A673 (cell line): ENCODE measurements at regions of chr2 and their contacts with region 1.

Region 1: DNA sequence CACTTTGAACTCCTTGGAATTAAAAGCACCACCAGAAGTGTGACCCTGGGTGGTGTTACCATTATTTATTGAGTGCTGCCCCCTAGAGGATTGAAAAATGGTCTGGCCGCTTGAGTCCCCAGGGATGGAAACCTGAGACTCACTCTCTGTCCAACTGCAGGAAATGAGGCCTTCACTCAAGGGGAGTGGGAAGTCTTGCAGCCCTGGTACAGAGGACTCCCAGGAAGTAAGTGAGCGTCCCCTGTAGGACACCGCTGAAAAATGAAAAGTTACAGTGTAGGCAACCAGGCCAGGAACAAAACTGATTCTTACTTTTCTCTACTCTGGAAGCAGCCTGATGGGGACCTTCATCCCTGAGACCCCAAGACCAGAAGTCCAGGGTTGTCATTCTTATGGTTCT is 2.2 kb upstream of the NRP2 start:
- DNase-seq: peak; percentile 97
- H3K4me3 ChIP-seq: no peak overlapping the region
- H3K27ac ChIP-seq: no peak overlapping the region
- H3K4me1 ChIP-seq: peaks cover 13% of the 10 kb centered on the region
- H3K27me3 ChIP-seq: peaks cover 27% of the 10 kb centered on the region
- CTCF ChIP-seq: peak; percentile 91

Region 2: GRCh38 chr2:204145263-204145751 is 1534.8 kb before region 1 on chr2:
- CTCF ChIA-PET with region 1: interaction called, 5 read pairs
- POLR2A ChIA-PET with region 1: no interaction called
- intact Hi-C with region 1: loop called (anchors 2 kb)
- DNase-seq: peak; percentile 89
- H3K4me3 ChIP-seq: peak overlapping the region; percentile 35
- H3K27ac ChIP-seq: peak overlapping the region; percentile 55
- H3K4me1 ChIP-seq: peaks cover 3% of the 10 kb centered on the region
- H3K27me3 ChIP-seq: no peaks in the 10 kb centered on the region
- CTCF ChIP-seq: peak; percentile 98

Region 3: GRCh38 chr2:204871231-204871953 is 808.7 kb before region 1 on chr2:
- CTCF ChIA-PET with region 1: interaction called, 7 read pairs
- POLR2A ChIA-PET with region 1: no interaction called
- intact Hi-C with region 1: loop called (anchors 2 kb)
- DNase-seq: peak; percentile 53
- H3K4me3 ChIP-seq: no peak overlapping the region
- H3K27ac ChIP-seq: no peak overlapping the region
- H3K4me1 ChIP-seq: no peaks in the 10 kb centered on the region
- H3K27me3 ChIP-seq: no peaks in the 10 kb centered on the region
- CTCF ChIP-seq: peak; percentile 59

Region 4: GRCh38 chr2:205590759-205591158 is 89.3 kb before region 1 on chr2:
- CTCF ChIA-PET with region 1: no interaction called
- POLR2A ChIA-PET with region 1: interaction called, 17 read pairs
- intact Hi-C with region 1: no loop called
- DNase-seq: no peak
- H3K4me3 ChIP-seq: no peak overlapping the region
- H3K27ac ChIP-seq: no peak overlapping the region
- H3K4me1 ChIP-seq: no peaks in the 10 kb centered on the region
- H3K27me3 ChIP-seq: no peaks in the 10 kb centered on the region
- CTCF ChIP-seq: no peak

Region 5: GRCh38 chr2:205734436-205735037 is 54.5 kb after region 1 on chr2:
- CTCF ChIA-PET with region 1: no interaction called
- POLR2A ChIA-PET with region 1: no interaction called
- intact Hi-C with region 1: no loop called
- DNase-seq: peak; percentile 55
- H3K4me3 ChIP-seq: no peak overlapping the region
- H3K27ac ChIP-seq: peak overlapping the region; percentile 63
- H3K4me1 ChIP-seq: peaks cover 19% of the 10 kb centered on the region
- H3K27me3 ChIP-seq: no peaks in the 10 kb centered on the region
- CTCF ChIP-seq: no peak

Region 6: GRCh38 chr2:205925373-205926337 is 245.6 kb after region 1 on chr2:
- CTCF ChIA-PET with region 1: interaction called, 4 read pairs
- POLR2A ChIA-PET with region 1: no interaction called
- intact Hi-C with region 1: loop called (anchors 5 kb)
- DNase-seq: peak; percentile 79
- H3K4me3 ChIP-seq: peak overlapping the region; percentile 17
- H3K27ac ChIP-seq: no peak overlapping the region
- H3K4me1 ChIP-seq: peaks cover 5% of the 10 kb centered on the region
- H3K27me3 ChIP-seq: no peaks in the 10 kb centered on the region
- CTCF ChIP-seq: peak; percentile 95